ENCODE measurements at regions of chr21 and their contacts with region 1.

Region 1: GRCh38 chr21:45140346-45140940 is 66.1 kb downstream of the ADARB1 start:
- DNase-seq: peak; percentile 85
- ATAC-seq: peak; percentile 95
- H3K4me3 Mint-ChIP-seq: no peak overlapping the region
- H3K27ac Mint-ChIP-seq: no peak overlapping the region
- H3K4me1 Mint-ChIP-seq: peaks cover 3% of the 10 kb centered on the region; the same call in 1 of the 2 replicates
- H3K27me3 Mint-ChIP-seq: no peaks in the 10 kb centered on the region
- CTCF ChIP-seq: peak; percentile 54; the same call in 1 of the 2 replicates

Region 2: DNA sequence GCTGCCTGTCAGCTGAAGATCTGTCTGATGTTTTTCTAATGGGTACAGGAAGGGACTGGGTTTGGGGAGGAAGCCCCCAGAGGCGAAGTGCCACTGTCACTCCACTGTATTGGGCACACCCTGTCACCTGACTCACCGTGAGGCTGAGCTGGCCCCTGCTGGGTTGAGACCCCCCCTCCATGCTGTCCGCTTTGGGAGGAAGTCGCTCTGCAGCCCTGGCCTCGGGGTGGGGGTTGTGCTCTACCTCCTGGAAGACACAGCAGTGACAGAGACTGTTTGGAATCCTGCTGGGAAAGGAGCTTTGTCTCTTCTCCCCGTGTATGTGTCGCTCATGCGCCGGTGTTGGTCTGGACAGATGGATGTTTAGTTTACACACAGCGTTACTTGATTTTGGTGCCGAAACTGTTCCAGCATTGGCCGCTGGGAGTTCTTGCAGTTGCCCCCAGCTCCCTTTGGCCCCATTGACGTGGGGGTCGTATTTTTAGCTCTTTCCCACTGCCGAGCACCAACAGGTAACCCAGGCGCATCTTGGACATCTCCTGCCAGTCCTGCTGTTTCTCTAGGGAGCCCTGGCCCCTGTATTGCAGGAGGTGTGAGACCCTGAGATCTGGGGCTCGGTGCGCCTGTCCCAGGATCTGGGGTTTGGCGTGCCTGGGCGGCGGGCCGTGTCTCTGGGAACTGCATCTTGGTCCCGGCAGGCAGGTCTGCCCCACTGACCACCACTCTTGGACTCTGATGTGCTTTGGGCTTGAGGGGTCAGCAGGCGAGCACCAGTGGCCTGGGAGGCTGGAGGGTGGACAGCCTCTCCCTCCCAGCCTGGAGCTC is 170.3 kb before region 1 on chr21:
- CTCF ChIA-PET with region 1: interaction called, 24 read pairs
- POLR2A ChIA-PET with region 1: interaction called, 3 read pairs
- DNase-seq: no peak
- ATAC-seq: no peak
- H3K4me3 Mint-ChIP-seq: no peak overlapping the region
- H3K27ac Mint-ChIP-seq: peak overlapping the region; percentile 46
- H3K4me1 Mint-ChIP-seq: peaks cover 15% of the 10 kb centered on the region
- H3K27me3 Mint-ChIP-seq: no peaks in the 10 kb centered on the region
- CTCF ChIP-seq: no peak

Region 3: GRCh38 chr21:45074048-45074817 is 66.2 kb before region 1 on chr21 and contains the start of gene ADARB1:
- CTCF ChIA-PET with region 1: interaction called, 10 read pairs
- POLR2A ChIA-PET with region 1: no interaction called
- DNase-seq: peak; percentile 68
- ATAC-seq: peak; percentile 49
- H3K4me3 Mint-ChIP-seq: peak within 1 kb of the TSS; percentile 82
- H3K27ac Mint-ChIP-seq: peak within 1 kb of the TSS; percentile 80; the same call in 1 of the 2 replicates
- H3K4me1 Mint-ChIP-seq: peaks cover 14% of the 10 kb centered on the region
- H3K27me3 Mint-ChIP-seq: peaks cover 30% of the 10 kb centered on the region
- CTCF ChIP-seq: no peak
- total RNA-seq, gene ADARB1: 12.8 to 15.1 TPM (median 14.6 TPM) in 3 replicates

Region 4: DNA sequence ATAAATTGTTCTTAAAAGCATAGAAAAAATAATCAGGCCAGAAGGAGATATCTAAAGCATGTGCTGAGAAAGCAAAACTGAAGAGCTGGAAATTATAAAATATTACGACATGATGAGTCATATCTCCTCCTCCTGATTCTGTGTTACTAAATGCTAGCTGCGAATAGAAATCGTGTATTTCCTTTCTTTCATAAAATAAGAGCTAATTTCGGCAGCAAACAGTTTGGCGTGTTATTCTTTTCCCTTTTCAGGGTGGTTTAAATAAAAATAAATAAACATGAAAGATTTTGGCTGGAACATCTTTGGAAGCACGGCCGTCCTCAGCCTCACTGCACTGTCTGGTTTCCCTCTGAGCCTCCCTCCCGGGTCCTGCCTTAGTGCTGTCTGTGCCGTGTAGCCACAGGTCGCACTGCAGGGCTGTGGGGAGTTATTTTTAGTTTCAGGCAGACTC is 10.1 kb before region 1 on chr21:
- CTCF ChIA-PET with region 1: interaction called, 49 read pairs
- POLR2A ChIA-PET with region 1: no interaction called
- DNase-seq: no peak
- ATAC-seq: no peak
- H3K4me3 Mint-ChIP-seq: no peak overlapping the region
- H3K27ac Mint-ChIP-seq: no peak overlapping the region
- H3K4me1 Mint-ChIP-seq: no peaks in the 10 kb centered on the region
- H3K27me3 Mint-ChIP-seq: no peaks in the 10 kb centered on the region
- CTCF ChIP-seq: no peak

Region 5: DNA sequence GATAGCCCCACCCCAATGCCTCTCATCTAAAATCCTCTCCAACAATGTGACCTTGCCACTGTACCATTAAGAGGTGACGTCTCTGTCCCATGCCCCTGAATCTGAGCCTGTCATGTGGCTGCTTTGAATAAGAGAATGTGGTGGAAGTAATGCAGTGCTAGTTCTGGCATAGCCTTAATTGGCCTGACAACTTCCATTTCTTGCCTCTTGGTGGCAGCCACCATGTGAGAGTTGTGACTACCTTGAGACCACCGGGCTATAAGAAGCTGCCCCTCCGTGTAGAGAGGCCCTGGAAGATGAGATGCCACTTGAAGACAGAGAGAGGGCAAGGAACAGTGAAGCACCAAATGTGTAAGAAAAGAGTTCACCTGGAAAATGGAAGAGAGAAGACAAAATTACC is 51.9 kb after region 1 on chr21:
- CTCF ChIA-PET with region 1: interaction called, 11 read pairs
- POLR2A ChIA-PET with region 1: no interaction called
- DNase-seq: no peak
- ATAC-seq: peak; percentile 78
- H3K4me3 Mint-ChIP-seq: no peak overlapping the region
- H3K27ac Mint-ChIP-seq: no peak overlapping the region
- H3K4me1 Mint-ChIP-seq: no peaks in the 10 kb centered on the region
- H3K27me3 Mint-ChIP-seq: no peaks in the 10 kb centered on the region
- CTCF ChIP-seq: no peak

Region 6: DNA sequence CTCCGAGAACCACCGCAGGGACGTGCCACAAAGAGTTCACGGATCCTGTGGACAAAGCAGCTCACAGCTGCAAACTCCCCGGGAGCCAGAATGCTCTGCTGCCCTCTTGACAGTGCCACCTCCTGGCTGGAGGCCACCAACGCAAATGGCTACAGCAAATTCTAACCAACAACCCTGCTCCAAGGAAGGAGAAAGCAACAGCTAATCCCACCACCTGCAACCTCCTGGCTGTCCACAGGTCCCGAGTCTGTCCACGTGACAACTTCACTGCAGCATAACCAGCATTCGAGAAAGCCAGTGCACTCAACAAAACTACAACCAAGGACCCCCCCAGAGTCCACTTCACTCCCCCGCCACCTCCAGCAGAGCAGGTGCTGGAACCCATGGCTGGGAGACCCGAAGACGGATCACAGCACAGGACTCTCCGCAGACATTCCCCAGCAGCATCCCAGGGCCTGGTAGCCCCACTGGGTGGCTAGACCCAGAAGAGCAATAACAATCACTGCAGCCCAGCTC is 129.9 kb after region 1 on chr21:
- CTCF ChIA-PET with region 1: interaction called, 20 read pairs
- POLR2A ChIA-PET with region 1: no interaction called
- DNase-seq: peak; percentile 48
- ATAC-seq: peak; percentile 46; the same call in 1 of the 2 replicates
- H3K4me3 Mint-ChIP-seq: no peak overlapping the region
- H3K27ac Mint-ChIP-seq: no peak overlapping the region
- H3K4me1 Mint-ChIP-seq: no peaks in the 10 kb centered on the region
- H3K27me3 Mint-ChIP-seq: no peaks in the 10 kb centered on the region
- CTCF ChIP-seq: no peak

Measured in WTC11 (cell line).